WTC11 (cell line): ENCODE measurements at regions of chr1 and their contacts with region 1.

Region 1: GRCh38 chr1:13950637-13951036 is 250.6 kb downstream of the PRDM2 start:
- DNase-seq: peak; percentile 75
- ATAC-seq: peak; percentile 99
- H3K4me3 Mint-ChIP-seq: no peak overlapping the region
- H3K27ac Mint-ChIP-seq: no peak overlapping the region
- H3K4me1 Mint-ChIP-seq: no peaks in the 10 kb centered on the region
- H3K27me3 Mint-ChIP-seq: peaks cover 22% of the 10 kb centered on the region
- CTCF ChIP-seq: peak; percentile 61

Region 2: DNA sequence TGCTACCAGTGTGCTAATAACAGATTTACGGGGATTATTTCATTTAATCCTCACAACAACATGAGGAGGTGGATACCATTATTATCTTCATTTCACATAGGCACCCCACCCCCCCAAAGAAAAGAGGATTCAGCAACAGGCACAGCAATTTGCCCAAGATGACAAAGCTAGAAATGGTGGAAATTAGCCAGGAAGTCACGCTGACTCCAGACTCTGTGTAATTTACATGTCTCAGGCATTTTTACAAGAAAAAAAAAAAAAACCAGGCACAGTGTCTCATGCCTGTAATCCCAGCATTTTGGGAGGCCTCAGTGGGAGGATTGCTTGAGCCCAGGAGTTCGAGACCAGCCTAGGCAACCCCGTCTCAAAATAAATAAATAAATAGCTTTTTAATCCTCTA is 288.1 kb before region 1 on chr1:
- CTCF ChIA-PET with region 1: no interaction called
- POLR2A ChIA-PET with region 1: no interaction called
- DNase-seq: no peak
- ATAC-seq: no peak
- H3K4me3 Mint-ChIP-seq: no peak overlapping the region
- H3K27ac Mint-ChIP-seq: no peak overlapping the region
- H3K4me1 Mint-ChIP-seq: 0 out of 2 replicates have a peak, but pooled peaks cover 7% of the 10 kb centered on the region
- H3K27me3 Mint-ChIP-seq: peaks cover 4% of the 10 kb centered on the region; the same call in 1 of the 2 replicates
- CTCF ChIP-seq: no peak

Region 3: GRCh38 chr1:13930151-13930550 is 20.5 kb before region 1 on chr1:
- CTCF ChIA-PET with region 1: interaction called, 22 read pairs
- POLR2A ChIA-PET with region 1: no interaction called
- DNase-seq: peak; percentile 73
- ATAC-seq: peak; percentile 93
- H3K4me3 Mint-ChIP-seq: no peak overlapping the region
- H3K27ac Mint-ChIP-seq: no peak overlapping the region
- H3K4me1 Mint-ChIP-seq: no peaks in the 10 kb centered on the region
- H3K27me3 Mint-ChIP-seq: peaks cover 43% of the 10 kb centered on the region
- CTCF ChIP-seq: peak; percentile 20; the same call in 1 of the 2 replicates

Region 4: DNA sequence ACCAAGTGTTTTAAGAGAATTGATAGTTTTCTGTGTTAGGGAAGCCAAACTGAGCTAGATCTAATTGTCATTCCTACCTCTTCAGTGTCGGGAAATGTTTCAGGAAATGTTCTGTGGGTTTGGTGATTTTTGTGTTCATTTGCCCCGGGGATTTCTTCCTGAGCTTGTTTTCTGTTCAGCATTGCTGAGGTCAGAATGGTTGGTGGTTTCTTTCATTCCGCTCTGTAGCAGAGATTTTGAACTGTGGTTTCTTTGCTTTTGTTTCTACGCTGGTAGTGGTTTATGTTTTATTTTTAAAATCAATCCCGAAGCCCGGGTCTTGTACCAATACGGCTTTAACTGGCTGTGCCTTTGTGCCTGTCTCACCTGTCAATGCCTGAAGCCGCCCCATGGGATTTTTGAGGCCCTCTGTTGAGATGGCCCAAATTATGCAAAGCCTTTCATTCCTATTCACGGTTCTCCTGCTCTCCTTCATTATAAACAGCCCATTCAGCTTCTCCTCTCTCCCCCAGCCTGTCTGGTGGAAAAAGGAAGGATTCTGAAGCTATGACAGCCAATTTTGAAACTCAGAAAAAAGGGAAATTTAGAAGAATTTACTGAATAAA is 230.7 kb after region 1 on chr1:
- CTCF ChIA-PET with region 1: no interaction called
- POLR2A ChIA-PET with region 1: no interaction called
- DNase-seq: no peak
- ATAC-seq: no peak
- H3K4me3 Mint-ChIP-seq: peak overlapping the region; percentile 11
- H3K27ac Mint-ChIP-seq: peak overlapping the region; percentile 39
- H3K4me1 Mint-ChIP-seq: peaks cover 73% of the 10 kb centered on the region
- H3K27me3 Mint-ChIP-seq: peaks cover 14% of the 10 kb centered on the region
- CTCF ChIP-seq: no peak